Panc1 (cell line): ENCODE measurements at regions of chr19 and their contacts with region 1.

Region 1: DNA sequence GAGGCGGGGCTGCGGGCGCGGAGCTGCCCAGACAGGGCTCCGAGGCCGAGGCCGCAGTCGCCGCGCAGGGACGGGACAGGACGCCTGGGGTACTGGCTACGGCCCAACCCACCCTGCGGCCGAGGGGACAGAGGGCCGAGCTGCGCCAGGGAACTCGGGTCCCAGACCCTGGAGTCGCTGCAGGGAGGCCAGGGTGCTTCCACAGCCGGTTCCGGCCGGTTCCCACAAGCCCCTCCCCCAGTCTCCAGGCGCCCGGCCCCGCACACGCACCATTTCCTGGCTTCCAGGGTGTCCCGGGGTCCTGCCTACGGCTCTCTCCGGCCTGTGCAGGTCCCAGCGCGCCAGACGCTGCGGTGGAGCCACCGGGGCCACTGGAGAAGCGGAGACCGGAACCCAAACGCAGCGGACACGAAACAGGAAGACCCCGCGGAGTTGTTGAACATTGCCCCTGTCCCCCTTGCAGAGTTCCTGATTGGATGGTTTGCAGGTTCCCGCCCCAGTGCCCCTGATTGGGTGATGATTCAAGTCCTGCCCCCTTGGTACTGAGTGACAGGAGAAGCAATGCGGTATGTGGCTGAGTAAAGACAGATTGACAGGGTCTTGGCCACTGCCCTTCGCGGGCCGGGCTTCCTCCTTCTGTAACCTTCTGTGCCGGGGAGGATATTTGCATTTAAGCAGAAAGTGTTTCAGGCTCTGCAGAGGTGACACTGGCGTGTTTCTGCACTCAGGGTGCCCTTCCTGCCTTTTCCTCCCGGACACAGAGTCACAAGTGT is at the start of gene ZNF564:
- DNase-seq: peak; percentile 89
- ATAC-seq: peak; percentile 99
- H3K4me3 ChIP-seq: peak within 1 kb of the TSS; percentile 73 to 95
- H3K27ac ChIP-seq: peak within 1 kb of the TSS; percentile 93
- H3K4me1 ChIP-seq: peaks cover 5% of the 10 kb centered on the region; the same call in 1 of the 2 replicates
- H3K27me3 ChIP-seq: no peaks in the 10 kb centered on the region
- CTCF ChIP-seq: no peak
- total RNA-seq, gene ZNF564: 5.7 TPM

Region 2: DNA sequence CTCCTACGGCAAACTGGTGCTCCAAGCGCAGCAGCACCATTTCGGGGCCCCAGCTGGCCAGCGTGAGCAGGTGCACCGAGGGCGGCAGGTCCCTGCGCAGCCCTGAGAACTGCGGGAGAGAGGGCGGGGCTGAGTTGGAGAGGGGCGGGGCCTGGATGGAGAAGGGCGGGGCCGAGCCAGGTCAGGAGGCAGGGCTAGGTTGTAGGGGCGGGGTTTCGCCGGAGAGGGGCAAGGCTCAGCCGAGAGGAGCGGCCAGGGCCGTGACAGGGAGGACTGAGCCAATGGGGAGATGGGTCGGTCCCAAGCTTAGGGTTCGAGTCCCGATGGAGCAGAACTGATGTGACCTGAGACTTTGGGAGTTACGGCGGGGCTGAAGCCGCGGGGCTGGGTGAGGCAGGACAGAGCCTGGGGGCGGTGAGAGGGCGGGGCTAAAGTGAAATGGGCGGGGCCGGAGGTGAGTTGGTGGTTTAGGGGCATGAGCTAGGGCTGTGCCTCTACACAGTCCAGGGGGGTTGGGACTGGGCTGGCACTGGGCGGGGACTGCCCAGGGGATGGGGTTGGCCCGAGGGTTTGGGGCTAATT is 96.3 kb after region 1 on chr19:
- CTCF ChIA-PET with region 1: no interaction called
- POLR2A ChIA-PET with region 1: no interaction called
- in situ Hi-C with region 1: no loop called
- intact Hi-C with region 1: loop called (anchors 5 kb)
- DNase-seq: no peak
- ATAC-seq: peak; percentile 80
- H3K4me3 ChIP-seq: no peak overlapping the region
- H3K27ac ChIP-seq: no peak overlapping the region
- H3K4me1 ChIP-seq: no peaks in the 10 kb centered on the region
- H3K27me3 ChIP-seq: no peaks in the 10 kb centered on the region
- CTCF ChIP-seq: no peak

Region 3: GRCh38 chr19:13082192-13083007 is 531.2 kb after region 1 on chr19:
- CTCF ChIA-PET with region 1: no interaction called
- POLR2A ChIA-PET with region 1: no interaction called
- in situ Hi-C with region 1: no loop called
- intact Hi-C with region 1: no loop called
- DNase-seq: no peak
- ATAC-seq: peak; percentile 77
- H3K4me3 ChIP-seq: no peak overlapping the region
- H3K27ac ChIP-seq: no peak overlapping the region
- H3K4me1 ChIP-seq: peaks cover 7% of the 10 kb centered on the region
- H3K27me3 ChIP-seq: no peaks in the 10 kb centered on the region
- CTCF ChIP-seq: no peak; the same call in 1 of the 2 replicates